Ovary (tissue), 10 donors: ENCODE measurements at regions of chr15 and their contacts with region 1.

Region 1: DNA sequence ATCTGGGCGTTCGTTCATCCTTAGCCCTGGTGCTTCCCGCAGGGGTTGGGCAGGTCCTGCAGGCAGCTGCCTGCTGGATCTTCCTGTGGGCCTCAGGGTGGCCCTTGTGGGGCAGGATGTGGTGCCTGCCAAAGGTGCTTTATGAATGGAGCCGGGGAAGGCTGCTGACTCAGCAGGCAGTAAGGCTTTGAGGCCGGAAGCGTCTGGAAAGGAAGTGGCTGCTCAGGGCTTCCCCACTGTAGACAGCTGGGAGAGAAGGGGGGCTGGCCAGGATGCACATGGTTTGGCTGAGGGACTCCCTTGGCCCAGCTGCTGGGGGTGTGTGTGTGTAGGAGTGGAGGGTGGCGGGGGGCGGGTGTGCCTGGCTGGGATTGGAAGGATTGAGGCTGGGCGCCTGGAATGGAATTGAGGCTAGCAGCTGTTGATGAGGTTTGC is 12.9 kb downstream of the CD276 start:
- DNase-seq: peak; percentile 87 to 93 (median 91)
- H3K4me3 ChIP-seq: no peak overlapping the region
- H3K27ac ChIP-seq: peak overlapping the region in 1 of 2 donors; percentile 16
- H3K4me1 ChIP-seq: peaks cover 4% of the 10 kb centered on the region
- H3K27me3 ChIP-seq: no peaks in the 10 kb centered on the region
- CTCF ChIP-seq: no peak
- EP300 ChIP-seq: no peak
- POLR2A ChIP-seq: no peak

Region 2: DNA sequence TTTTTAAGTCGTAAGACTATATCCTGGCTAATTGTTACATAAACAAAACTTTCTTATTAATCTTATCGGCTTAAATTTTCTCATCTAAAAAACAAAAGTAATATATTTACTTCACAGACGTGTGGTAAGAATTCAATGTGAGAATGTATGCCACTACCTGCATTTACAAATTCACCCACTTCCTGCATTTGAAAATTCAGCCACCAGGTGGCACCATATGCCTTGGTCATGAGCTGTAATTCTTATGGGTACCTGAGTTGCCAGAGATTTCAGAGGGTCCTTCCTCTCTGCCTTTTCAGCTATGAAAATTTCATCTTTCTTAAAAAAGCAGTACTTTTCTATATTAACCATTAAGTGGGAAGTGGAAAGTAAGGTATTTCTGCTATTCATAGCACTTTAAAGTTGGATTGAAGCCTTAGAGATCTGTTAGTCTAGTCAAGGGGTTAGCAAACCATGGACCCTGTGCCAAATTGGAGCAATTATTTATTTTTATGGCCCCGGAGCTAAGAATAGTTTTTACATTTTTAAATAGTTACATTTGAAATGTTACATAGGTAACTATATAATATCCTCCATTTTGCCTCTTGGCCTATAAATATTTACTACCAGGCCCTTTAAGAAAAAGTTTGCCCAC is 456.1 kb before region 1 on chr15:
- intact Hi-C with region 1: loop called in 1 of 4 experiments (anchors 10 kb)
- DNase-seq: peak; percentile 44 to 72 (median 56)
- H3K4me3 ChIP-seq: no peak overlapping the region
- H3K27ac ChIP-seq: no peak overlapping the region
- H3K4me1 ChIP-seq: no peaks in the 10 kb centered on the region
- H3K27me3 ChIP-seq: no peaks in the 10 kb centered on the region
- CTCF ChIP-seq: peak; percentile 64 to 76 (median 73)
- EP300 ChIP-seq: no peak
- POLR2A ChIP-seq: no peak

Region 3: DNA sequence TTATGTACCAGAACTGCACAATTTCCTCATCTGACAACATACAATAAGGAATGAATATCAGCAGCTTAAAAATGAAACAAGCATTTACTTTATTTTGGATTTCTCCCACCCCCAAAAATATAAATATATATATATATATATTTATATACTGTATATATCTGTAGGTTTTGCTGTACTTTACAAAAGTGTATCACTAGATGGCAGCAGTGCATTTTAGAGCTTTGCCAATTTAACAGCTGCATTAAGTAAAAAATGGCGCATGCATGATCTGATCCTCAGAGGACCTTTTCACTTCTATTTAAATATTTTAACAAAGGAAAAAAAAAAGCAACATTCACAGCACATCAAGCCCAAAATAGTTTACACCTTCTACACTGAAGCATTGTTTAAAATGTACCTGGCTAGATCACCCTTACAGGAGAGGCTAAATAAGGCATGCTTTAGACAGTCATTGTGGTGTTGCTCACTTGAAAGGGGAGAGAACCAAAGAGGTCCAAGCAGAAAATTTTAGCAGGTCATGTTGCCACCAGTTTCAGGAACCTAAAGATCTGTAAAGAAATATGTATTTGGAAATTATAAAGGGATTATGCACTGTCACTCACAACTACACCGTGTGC is 136.4 kb before region 1 on chr15:
- intact Hi-C with region 1: loop called (anchors 1 to 10 kb)
- DNase-seq: no peak
- H3K4me3 ChIP-seq: no peak overlapping the region
- H3K27ac ChIP-seq: no peak overlapping the region
- H3K4me1 ChIP-seq: no peaks in the 10 kb centered on the region
- H3K27me3 ChIP-seq: no peaks in the 10 kb centered on the region
- CTCF ChIP-seq: peak in 1 of 3 donors; percentile 46
- EP300 ChIP-seq: no peak
- POLR2A ChIP-seq: no peak

Region 4: DNA sequence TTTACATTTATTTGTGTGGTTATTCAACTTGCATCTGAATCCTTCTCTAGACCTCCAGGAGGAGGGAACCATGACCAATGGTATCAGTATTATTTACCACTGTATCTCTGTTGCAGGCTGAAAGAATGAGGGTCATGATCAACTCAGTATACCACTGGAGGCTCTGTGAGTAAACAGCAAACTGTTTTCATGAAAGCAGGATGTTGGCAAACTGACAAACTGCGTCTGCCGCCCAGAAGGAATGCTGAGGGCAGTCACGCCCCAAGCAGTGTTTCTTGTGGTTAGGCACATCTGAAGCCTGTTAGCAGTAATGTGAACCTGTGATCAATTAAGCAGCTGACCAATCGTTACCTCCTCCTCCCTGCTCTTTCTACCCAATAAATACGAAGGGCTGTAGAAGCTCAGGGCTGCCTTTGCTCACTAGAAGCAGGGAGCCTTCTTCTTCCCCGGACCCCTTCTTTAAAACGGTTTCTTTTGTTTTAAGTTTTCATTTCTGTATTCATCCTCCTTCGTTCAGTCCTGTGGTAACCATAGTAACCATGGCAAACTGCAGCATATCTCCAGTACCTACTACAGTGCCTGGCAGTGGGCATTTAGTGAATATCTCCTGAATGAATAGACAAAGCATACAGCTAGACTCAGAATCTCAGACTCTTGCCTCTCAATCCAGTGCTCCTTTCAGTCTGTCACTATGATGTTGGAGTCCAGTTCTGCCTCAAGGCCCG is 57.4 kb before region 1 on chr15:
- intact Hi-C with region 1: loop called in 2 of 4 experiments (anchors 5 kb)
- DNase-seq: no peak
- H3K4me3 ChIP-seq: no peak overlapping the region
- H3K27ac ChIP-seq: no peak overlapping the region
- H3K4me1 ChIP-seq: no peaks in the 10 kb centered on the region
- H3K27me3 ChIP-seq: no peaks in the 10 kb centered on the region
- CTCF ChIP-seq: no peak
- EP300 ChIP-seq: no peak
- POLR2A ChIP-seq: no peak

Region 5: GRCh38 chr15:73677146-73677607 is 19.9 kb before region 1 on chr15:
- intact Hi-C with region 1: loop called in 1 of 4 experiments (anchors 2 kb)
- DNase-seq: peak; percentile 55 to 80 (median 65)
- H3K4me3 ChIP-seq: no peak overlapping the region
- H3K27ac ChIP-seq: no peak overlapping the region
- H3K4me1 ChIP-seq: no peaks in the 10 kb centered on the region
- H3K27me3 ChIP-seq: no peaks in the 10 kb centered on the region
- CTCF ChIP-seq: peak; percentile 67 to 88 (median 83)
- EP300 ChIP-seq: no peak
- POLR2A ChIP-seq: no peak

Region 6: GRCh38 chr15:73908030-73908821 is 211.2 kb after region 1 on chr15:
- intact Hi-C with region 1: loop called in 1 of 4 experiments (anchors 10 kb)
- DNase-seq: peak; percentile 79 to 92 (median 86)
- H3K4me3 ChIP-seq: no peak overlapping the region
- H3K27ac ChIP-seq: no peak overlapping the region
- H3K4me1 ChIP-seq: no peaks in the 10 kb centered on the region
- H3K27me3 ChIP-seq: no peaks in the 10 kb centered on the region
- CTCF ChIP-seq: peak; percentile 78 to 92 (median 79)
- EP300 ChIP-seq: no peak
- POLR2A ChIP-seq: no peak